Psoas muscle (tissue), 8 donors: ENCODE measurements at regions of chr9 and their contacts with region 1.

Region 1: GRCh38 chr9:94213511-94214124 is 45.5 kb upstream of the ZNF169 start:
- DNase-seq: peak; percentile 53 to 71
- ATAC-seq: peak; percentile 87 to 99 (median 95)
- H3K4me3 ChIP-seq: no peak overlapping the region
- H3K27ac ChIP-seq: no peak overlapping the region
- H3K4me1 ChIP-seq: no peaks in the 10 kb centered on the region
- H3K27me3 ChIP-seq: peaks cover 0 to 2% (median 0%) of the 10 kb centered on the region in 3 donors
- CTCF ChIP-seq: peak; percentile 91

Region 2: GRCh38 chr9:93682232-93682968 is 531.2 kb before region 1 on chr9:
- intact Hi-C with region 1: loop called in 1 of 2 experiments (anchors 10 kb)
- DNase-seq: peak in 1 of 2 donors; percentile 58
- ATAC-seq: peak; percentile 60 to 80 (median 74)
- H3K4me3 ChIP-seq: no peak overlapping the region
- H3K27ac ChIP-seq: no peak overlapping the region
- H3K4me1 ChIP-seq: no peaks in the 10 kb centered on the region
- H3K27me3 ChIP-seq: peaks cover 0 to 2% (median 0%) of the 10 kb centered on the region in 3 donors
- CTCF ChIP-seq: peak; percentile 69

Region 3: GRCh38 chr9:94014065-94014654 is 199.5 kb before region 1 on chr9:
- intact Hi-C with region 1: loop called in 1 of 2 experiments (anchors 5 kb)
- DNase-seq: no peak
- ATAC-seq: peak in 2 of 4 donors; percentile 25 to 54
- H3K4me3 ChIP-seq: no peak overlapping the region
- H3K27ac ChIP-seq: no peak overlapping the region
- H3K4me1 ChIP-seq: no peaks in the 10 kb centered on the region
- H3K27me3 ChIP-seq: no peaks in the 10 kb centered on the region
- CTCF ChIP-seq: peak; percentile 60

Region 4: DNA sequence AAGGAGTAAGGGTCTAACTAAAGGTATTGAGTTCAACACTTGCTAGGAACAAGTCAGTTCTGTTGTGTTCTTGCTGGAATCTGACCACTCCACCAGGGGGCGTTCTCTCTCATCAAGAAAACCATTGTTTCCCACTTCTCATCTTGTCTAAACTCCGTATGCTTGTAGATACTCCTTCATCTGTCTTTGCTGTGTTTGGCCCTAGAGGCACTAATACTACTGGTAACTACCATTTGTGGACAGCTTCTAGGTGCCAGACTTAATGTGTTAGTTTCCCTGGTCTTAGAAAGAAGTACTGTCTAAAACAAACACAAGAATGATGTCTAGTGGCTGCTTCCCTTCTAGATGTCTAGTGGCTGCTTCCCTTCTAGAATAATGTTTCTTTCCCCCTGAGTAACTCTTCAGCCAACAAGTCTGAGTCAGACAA is 148.1 kb before region 1 on chr9:
- intact Hi-C with region 1: loop called (anchors 1 kb)
- DNase-seq: peak; percentile 66 to 77
- ATAC-seq: peak; percentile 80 to 96 (median 84)
- H3K4me3 ChIP-seq: no peak overlapping the region
- H3K27ac ChIP-seq: no peak overlapping the region
- H3K4me1 ChIP-seq: peaks cover 4% of the 10 kb centered on the region
- H3K27me3 ChIP-seq: no peaks in the 10 kb centered on the region
- CTCF ChIP-seq: peak; percentile 92

Region 5: GRCh38 chr9:94173632-94174031 is 40.0 kb before region 1 on chr9:
- intact Hi-C with region 1: loop called in 1 of 2 experiments (anchors 5 kb)
- DNase-seq: no peak
- ATAC-seq: peak in 1 of 4 donors; percentile 24
- H3K4me3 ChIP-seq: peak overlapping the region; percentile 96
- H3K27ac ChIP-seq: peak overlapping the region; percentile 100
- H3K4me1 ChIP-seq: peaks cover 100% of the 10 kb centered on the region
- H3K27me3 ChIP-seq: no peaks in the 10 kb centered on the region
- CTCF ChIP-seq: no peak